ENCODE measurements at regions of chr6 and their contacts with region 1.

Region 1: GRCh38 chr6:56475736-56476457 is 166.8 kb downstream of the DST start:
- DNase-seq: no peak
- H3K4me3 ChIP-seq: no peak overlapping the region
- H3K27me3 ChIP-seq: no peaks in the 10 kb centered on the region
- CTCF ChIP-seq: no peak

Region 2: GRCh38 chr6:56246881-56247653 is 228.8 kb before region 1 on chr6 and contains the start of gene COL21A1:
- CTCF ChIA-PET with region 1: no interaction called
- POLR2A ChIA-PET with region 1: no interaction called
- DNase-seq: no peak
- H3K4me3 ChIP-seq: peak within 1 kb of the TSS; percentile 30
- H3K27me3 ChIP-seq: peaks cover 9% of the 10 kb centered on the region; the same call in 1 of the 2 replicates
- CTCF ChIP-seq: peak; percentile 51
- polyA plus RNA-seq, gene COL21A1: 0.07 and 0.25 TPM in 2 replicates

Region 3: DNA sequence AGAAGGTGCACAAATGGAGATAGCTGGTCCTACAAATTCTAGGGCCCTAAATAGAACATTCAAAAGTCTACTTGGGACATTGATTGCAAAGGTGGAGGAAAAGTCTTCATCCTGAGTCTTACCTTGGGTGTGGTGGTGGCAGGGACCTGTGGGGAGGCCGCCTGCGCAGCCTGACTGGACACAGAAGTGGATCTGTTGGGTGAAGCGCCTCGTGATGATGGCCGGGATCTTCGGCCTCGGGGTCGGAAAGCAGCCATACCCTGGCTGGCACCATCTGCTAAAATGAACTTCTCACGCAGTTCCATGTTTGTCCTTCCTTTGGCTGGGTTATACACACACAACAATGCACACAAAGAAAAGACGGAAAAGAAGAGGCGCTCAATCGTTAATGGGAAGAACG is 12.5 kb before region 1 on chr6:
- CTCF ChIA-PET with region 1: interaction called, 10 read pairs
- POLR2A ChIA-PET with region 1: no interaction called
- DNase-seq: no peak
- H3K4me3 ChIP-seq: no peak overlapping the region
- H3K27me3 ChIP-seq: no peaks in the 10 kb centered on the region
- CTCF ChIP-seq: no peak

Region 4: GRCh38 chr6:56517155-56517745 is 41.4 kb after region 1 on chr6:
- CTCF ChIA-PET with region 1: no interaction called
- POLR2A ChIA-PET with region 1: no interaction called
- DNase-seq: peak; percentile 74
- H3K4me3 ChIP-seq: no peak overlapping the region
- H3K27me3 ChIP-seq: no peaks in the 10 kb centered on the region
- CTCF ChIP-seq: no peak

Measured in BJ (cell line).